ENCODE measurements at regions of chr10 and their contacts with region 1.

Region 1: DNA sequence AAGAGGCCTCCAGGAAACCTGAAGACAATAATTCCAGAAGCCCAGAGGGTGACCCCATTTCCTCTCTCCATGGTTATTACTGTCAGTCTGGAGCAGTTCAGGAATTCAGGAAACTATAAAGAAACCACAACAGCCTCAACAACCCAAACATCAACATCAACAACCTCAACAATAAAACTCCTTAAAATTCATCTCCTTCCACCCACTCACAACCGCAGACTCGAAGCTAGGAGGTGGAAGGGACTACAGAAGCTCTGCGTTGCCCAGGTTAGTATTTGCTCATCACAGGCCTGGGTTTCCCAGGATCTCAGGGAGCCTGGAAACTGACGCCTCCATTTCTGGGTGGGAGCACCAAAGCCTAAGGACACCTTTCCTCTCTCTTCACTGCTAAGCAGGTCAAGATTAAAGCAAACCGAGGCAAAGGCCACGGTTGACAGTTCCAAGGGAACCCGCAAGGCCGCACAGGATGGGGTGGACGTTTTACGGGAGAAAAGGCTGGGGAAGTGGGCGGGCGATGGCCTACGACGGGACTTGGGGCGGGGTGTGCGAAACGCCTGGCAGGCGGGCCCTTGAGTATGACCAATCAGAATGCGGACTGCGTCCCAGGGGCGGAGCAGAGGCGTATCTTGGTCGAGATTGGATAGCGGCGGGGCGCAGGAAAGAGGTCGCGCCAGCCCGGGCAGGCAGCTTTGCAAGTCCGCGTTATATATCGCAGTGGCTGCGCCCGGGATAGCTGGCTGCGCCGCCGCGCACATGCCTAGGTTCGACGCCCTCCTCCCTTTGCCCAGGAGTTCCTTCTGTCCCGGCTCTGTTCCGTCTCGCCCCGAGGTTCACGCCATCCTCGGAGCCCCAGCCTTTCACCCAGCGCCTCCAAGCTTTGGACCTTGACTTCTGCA is at the start of gene ELOVL3:
- DNase-seq: peak; percentile 98
- H3K4me3 ChIP-seq: peak within 1 kb of the TSS in 1 of 2 experiments; percentile 31; a peak in 1 of 4 replicates
- H3K27ac ChIP-seq: no peak within 1 kb of the TSS; a peak in 1 of 4 replicates
- H3K4me1 ChIP-seq: peaks cover 0 to 18% of the 10 kb centered on the region in 2 experiments; a peak in 2 of 4 replicates
- H3K27me3 ChIP-seq: peaks cover 17% of the 10 kb centered on the region; the same call in 1 of the 2 replicates
- CTCF ChIP-seq: no peak
- EP300 ChIP-seq: no peak
- RAD21 ChIP-seq: no peak
- polyA plus RNA-seq, gene ELOVL3: 0.25 and 0.29 TPM in 2 replicates

Region 2: DNA sequence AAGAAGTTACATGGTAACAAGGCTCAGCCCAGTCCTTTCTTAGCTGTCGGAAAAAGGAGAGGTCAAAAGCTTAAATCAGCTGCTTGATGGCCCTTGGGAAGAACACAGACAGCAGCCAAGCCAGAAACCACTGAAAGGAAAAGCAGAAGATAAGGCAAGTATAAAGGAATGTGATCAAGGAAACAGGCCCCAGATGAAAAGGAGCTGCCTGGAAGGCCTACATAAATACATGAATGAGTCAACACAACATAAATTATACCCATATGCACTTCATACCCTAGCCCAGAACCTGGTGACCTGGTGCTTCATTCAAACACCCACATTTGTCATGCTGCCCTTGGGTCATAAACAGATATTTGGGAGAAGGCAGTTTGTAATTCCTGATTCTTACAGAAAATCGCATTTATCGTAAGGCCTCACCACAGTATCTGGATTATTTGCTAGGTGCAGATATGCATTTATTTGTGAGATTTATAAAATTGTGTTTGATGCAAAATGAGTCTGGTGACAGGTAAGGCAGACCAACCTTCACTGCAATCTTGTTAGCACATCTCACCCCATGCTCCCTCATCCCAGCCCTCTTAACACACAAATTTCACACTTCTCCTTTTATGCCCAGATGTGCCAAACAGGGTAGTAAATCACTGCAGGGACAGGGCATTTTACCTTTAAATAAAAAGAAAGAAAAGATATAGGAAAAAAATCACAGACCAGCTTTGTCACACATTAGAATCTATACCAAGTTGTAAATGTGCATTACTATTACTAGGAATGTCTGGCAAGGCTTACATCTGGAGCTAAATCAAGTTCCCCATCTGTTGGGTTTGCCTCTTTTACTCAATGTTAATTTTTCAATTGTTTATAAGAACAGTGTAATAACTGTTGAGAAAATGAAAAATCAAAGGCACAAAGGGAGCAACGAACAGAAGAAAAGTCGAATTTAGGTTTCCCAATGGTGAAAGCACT is 287.3 kb before region 1 on chr10:
- CTCF ChIA-PET with region 1: no interaction called
- POLR2A ChIA-PET with region 1: no interaction called
- DNase-seq: no peak
- H3K4me3 ChIP-seq: no peak overlapping the region
- H3K27ac ChIP-seq: peak overlapping the region; percentile 40 to 75
- H3K4me1 ChIP-seq: peaks cover 2 to 44% of the 10 kb centered on the region in 2 experiments
- H3K27me3 ChIP-seq: no peaks in the 10 kb centered on the region
- CTCF ChIP-seq: no peak
- EP300 ChIP-seq: peak in 1 of 2 experiments; percentile 54; a peak in 1 of 4 replicates
- RAD21 ChIP-seq: no peak

Region 3: DNA sequence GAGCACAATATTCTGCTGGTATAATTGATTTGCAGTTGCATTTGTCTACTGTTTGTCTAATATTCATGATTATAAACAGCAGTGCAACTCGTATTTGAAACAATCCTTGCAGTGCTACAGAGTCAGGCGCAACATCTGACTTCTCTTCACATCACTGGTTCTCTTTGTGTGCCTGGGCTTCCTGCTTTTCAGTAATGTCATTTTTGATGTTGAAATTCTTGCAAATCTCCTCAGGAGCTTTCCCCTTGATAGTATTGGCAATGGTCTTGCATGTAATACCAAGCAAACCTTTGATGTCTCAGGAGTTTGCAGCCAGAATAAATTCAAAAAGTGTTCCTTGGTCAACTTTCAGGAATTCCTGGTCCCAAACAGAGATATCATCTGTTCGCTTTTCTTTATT is 140.6 kb before region 1 on chr10:
- CTCF ChIA-PET with region 1: no interaction called
- POLR2A ChIA-PET with region 1: no interaction called
- DNase-seq: no peak
- H3K4me3 ChIP-seq: no peak overlapping the region
- H3K27ac ChIP-seq: no peak overlapping the region
- H3K4me1 ChIP-seq: no peaks in the 10 kb centered on the region
- H3K27me3 ChIP-seq: no peaks in the 10 kb centered on the region
- CTCF ChIP-seq: no peak
- EP300 ChIP-seq: no peak
- RAD21 ChIP-seq: no peak

Region 4: DNA sequence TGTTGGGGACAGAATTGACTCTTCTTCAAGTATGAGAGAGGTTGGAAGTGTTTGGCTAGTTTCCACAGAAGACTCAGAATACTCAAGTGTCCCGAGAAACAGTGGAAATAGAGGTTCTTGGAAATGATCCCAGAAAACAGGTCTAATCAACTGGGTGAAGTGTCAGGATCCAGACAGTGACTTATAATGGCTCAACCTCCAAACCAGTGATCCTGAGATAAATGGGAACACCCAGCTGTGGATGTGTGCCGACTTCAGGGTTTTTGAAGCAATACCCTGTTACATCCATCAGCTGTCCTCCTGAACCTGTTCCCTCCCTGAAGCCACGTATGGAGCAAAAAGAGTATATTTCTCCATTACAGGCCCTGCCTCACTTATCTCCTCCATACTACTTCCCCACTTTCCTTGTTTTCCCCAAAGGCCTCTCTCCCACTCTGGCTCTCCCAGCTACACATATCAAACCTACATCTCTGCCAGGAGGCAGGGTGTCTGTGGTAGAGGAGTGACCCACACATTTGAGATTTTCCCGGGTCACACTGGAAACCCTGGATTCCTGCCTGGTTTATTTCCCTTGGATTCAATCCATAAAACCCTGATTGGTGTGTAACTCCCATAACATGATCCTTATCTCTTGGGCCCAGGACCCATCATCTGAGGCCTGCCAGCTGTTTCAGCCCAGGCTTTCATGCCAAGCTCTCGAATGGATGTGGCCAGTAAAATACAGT is 17.4 kb before region 1 on chr10:
- CTCF ChIA-PET with region 1: interaction called, 23 read pairs
- POLR2A ChIA-PET with region 1: interaction called, 6 read pairs
- DNase-seq: peak; percentile 87
- H3K4me3 ChIP-seq: no peak overlapping the region
- H3K27ac ChIP-seq: peak overlapping the region; percentile 44 to 79; a peak in 3 of 4 replicates
- H3K4me1 ChIP-seq: peaks cover 9 to 14% of the 10 kb centered on the region in 2 experiments; a peak in 3 of 4 replicates
- H3K27me3 ChIP-seq: no peaks in the 10 kb centered on the region
- CTCF ChIP-seq: no peak
- EP300 ChIP-seq: peak in 1 of 2 experiments; percentile 65; a peak in 2 of 4 replicates
- RAD21 ChIP-seq: peak; percentile 26

Region 5: DNA sequence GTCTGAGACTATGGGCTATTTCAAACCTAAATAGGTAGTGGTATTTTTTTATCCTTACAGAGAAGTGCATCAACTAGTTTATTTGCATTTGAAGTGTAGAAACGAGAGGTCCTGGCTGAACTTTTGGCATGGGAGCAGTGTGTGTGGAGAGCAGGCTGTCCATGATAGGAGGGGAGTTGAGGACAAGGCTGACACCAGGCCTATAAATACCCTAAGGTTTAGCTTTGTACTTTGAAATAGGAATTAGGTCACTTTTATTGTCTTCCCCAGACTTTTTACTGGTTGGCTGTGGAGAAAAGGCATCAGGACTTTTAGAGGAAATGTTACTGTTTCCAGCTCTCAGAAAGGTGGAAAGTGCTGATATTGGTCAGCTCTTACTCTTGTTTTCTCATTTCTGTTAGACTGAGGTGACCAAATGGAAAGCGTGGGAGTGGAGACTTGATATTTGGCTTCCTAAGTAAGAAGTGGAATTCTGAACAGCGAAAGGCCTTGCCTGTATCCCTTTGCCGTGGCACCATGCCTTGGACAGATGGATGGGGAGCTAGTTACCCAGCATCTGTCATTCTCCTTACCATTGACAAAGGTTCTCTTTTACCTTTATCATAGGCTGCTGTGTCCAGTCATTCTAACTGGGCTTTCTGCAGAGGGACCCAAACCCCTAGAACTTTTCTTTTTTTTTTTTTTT is 65.5 kb after region 1 on chr10:
- CTCF ChIA-PET with region 1: interaction called, 12 read pairs
- POLR2A ChIA-PET with region 1: no interaction called
- DNase-seq: no peak
- H3K4me3 ChIP-seq: no peak overlapping the region
- H3K27ac ChIP-seq: no peak overlapping the region
- H3K4me1 ChIP-seq: no peaks in the 10 kb centered on the region
- H3K27me3 ChIP-seq: no peaks in the 10 kb centered on the region
- CTCF ChIP-seq: no peak
- EP300 ChIP-seq: no peak
- RAD21 ChIP-seq: no peak

Region 6: DNA sequence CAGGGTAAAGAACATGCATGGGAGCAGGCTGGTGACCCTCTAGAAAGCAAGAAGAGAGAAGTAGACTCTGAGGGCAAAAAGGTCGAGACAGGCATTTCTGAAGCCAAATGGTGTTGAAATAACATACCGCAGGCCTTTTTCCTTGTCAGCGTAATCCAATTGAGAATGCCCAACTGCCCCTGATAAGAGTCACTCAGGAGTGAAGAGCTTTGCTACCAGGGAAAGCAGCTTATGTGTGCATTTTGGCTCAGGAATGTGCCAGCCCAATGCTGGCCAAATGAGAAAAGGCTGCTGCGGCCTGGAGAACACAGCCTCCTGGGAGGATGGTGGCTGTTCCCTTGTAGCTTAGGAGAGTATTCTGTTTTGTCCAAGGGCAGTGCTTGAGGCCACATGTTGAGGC is 108.2 kb after region 1 on chr10:
- CTCF ChIA-PET with region 1: interaction called, 22 read pairs
- POLR2A ChIA-PET with region 1: no interaction called
- DNase-seq: peak; percentile 54
- H3K4me3 ChIP-seq: no peak overlapping the region
- H3K27ac ChIP-seq: no peak overlapping the region
- H3K4me1 ChIP-seq: peaks cover 0 to 6% of the 10 kb centered on the region in 2 experiments; a peak in 1 of 4 replicates
- H3K27me3 ChIP-seq: no peaks in the 10 kb centered on the region
- CTCF ChIP-seq: no peak
- EP300 ChIP-seq: no peak
- RAD21 ChIP-seq: no peak

Region 7: GRCh38 chr10:102368072-102368471 is 142.2 kb after region 1 on chr10:
- CTCF ChIA-PET with region 1: interaction called, 824 read pairs
- POLR2A ChIA-PET with region 1: no interaction called
- DNase-seq: no peak
- H3K4me3 ChIP-seq: no peak overlapping the region
- H3K27ac ChIP-seq: no peak overlapping the region
- H3K4me1 ChIP-seq: no peaks in the 10 kb centered on the region
- H3K27me3 ChIP-seq: no peaks in the 10 kb centered on the region
- CTCF ChIP-seq: no peak
- EP300 ChIP-seq: no peak
- RAD21 ChIP-seq: no peak

Region 8: GRCh38 chr10:102394079-102394800 is 168.3 kb after region 1 on chr10:
- CTCF ChIA-PET with region 1: interaction called, 163 read pairs
- POLR2A ChIA-PET with region 1: no interaction called
- DNase-seq: peak; percentile 92
- H3K4me3 ChIP-seq: peak overlapping the region; percentile 65 to 77
- H3K27ac ChIP-seq: peak overlapping the region; percentile 47 to 81; a peak in 3 of 4 replicates
- H3K4me1 ChIP-seq: peaks cover 0 to 17% of the 10 kb centered on the region in 2 experiments; a peak in 1 of 4 replicates
- H3K27me3 ChIP-seq: no peaks in the 10 kb centered on the region
- CTCF ChIP-seq: no peak; the same call in 1 of the 2 replicates
- EP300 ChIP-seq: no peak
- RAD21 ChIP-seq: no peak

Region 9: DNA sequence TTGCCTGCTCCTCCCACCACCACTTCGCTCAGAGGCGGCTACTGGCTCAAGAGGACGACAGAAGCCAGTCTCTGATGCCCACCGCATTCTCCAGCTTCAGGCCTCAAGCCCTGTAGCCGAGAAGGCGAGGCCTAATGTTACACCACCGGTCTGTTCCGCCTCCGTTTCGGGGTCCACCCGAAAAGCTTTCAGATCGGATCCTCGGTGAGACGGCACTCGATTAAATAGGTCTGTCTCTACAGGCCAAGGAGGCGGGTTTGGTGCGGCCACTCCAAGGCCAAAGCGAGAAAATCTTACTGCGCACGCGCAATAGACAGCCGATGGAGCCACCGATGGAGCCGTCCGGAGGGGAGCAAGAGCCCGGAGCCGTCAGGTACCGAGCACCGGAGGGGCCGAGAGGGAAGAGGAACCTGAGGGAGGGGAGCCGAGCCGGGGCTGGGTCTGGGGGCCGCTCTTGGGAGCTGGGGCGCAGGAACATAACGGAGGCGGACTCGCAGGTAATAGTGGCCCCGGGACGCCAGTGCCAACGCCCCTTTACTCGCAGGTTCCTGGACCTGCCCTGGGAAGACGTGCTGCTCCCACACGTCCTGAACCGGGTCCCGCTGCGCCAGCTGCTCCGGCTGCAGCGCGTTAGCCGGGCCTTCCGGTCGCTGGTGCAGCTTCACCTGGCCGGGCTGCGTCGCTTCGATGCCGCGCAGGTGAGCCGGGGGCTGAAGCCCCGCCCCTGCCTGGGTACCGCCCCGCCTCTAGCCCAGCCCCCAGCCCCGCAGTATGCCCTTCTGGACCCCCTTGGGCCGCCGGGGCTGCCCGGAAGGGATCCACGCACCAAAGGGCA is 195.1 kb after region 1 on chr10 and contains the start of gene FBXL15:
- CTCF ChIA-PET with region 1: interaction called, 57 read pairs
- POLR2A ChIA-PET with region 1: no interaction called
- DNase-seq: peak; percentile 91
- H3K4me3 ChIP-seq: peak within 1 kb of the TSS; percentile 77 to 90
- H3K27ac ChIP-seq: peak within 1 kb of the TSS; percentile 78 to 99
- H3K4me1 ChIP-seq: peaks cover 0 to 29% of the 10 kb centered on the region in 2 experiments; a peak in 2 of 4 replicates
- H3K27me3 ChIP-seq: no peaks in the 10 kb centered on the region
- CTCF ChIP-seq: no peak
- EP300 ChIP-seq: no peak
- RAD21 ChIP-seq: no peak
- polyA plus RNA-seq, gene FBXL15: 11.7 and 17.2 TPM in 2 replicates

Region 10: GRCh38 chr10:102604379-102604960 is 378.6 kb after region 1 on chr10:
- CTCF ChIA-PET with region 1: no interaction called
- POLR2A ChIA-PET with region 1: no interaction called
- DNase-seq: no peak
- H3K4me3 ChIP-seq: no peak overlapping the region; a peak in 1 of 4 replicates
- H3K27ac ChIP-seq: peak overlapping the region in 1 of 2 experiments; percentile 79; a peak in 2 of 4 replicates
- H3K4me1 ChIP-seq: peaks cover 0 to 30% of the 10 kb centered on the region in 2 experiments; a peak in 3 of 4 replicates
- H3K27me3 ChIP-seq: no peaks in the 10 kb centered on the region
- CTCF ChIP-seq: no peak
- EP300 ChIP-seq: peak in 1 of 2 experiments; percentile 38; a peak in 1 of 4 replicates
- RAD21 ChIP-seq: no peak

Region 11: GRCh38 chr10:103021897-103022286 is 796.0 kb after region 1 on chr10:
- CTCF ChIA-PET with region 1: no interaction called
- POLR2A ChIA-PET with region 1: no interaction called
- DNase-seq: no peak
- H3K4me3 ChIP-seq: no peak overlapping the region
- H3K27ac ChIP-seq: no peak overlapping the region
- H3K4me1 ChIP-seq: no peaks in the 10 kb centered on the region
- H3K27me3 ChIP-seq: no peaks in the 10 kb centered on the region
- CTCF ChIP-seq: no peak
- EP300 ChIP-seq: no peak
- RAD21 ChIP-seq: no peak